ENCODE measurements at regions of chr11 and their contacts with region 1.

Region 1: GRCh38 chr11:10418259-10418949 is 36.7 kb upstream of the AMPD3 start:
- DNase-seq: peak; percentile 22
- ATAC-seq: peak; percentile 84
- H3K4me3 ChIP-seq: no peak overlapping the region
- H3K27ac ChIP-seq: no peak overlapping the region
- H3K4me1 ChIP-seq: 0 out of 2 replicates have a peak, but pooled peaks cover 2% of the 10 kb centered on the region
- H3K27me3 ChIP-seq: no peaks in the 10 kb centered on the region
- CTCF ChIP-seq: no peak

Region 2: DNA sequence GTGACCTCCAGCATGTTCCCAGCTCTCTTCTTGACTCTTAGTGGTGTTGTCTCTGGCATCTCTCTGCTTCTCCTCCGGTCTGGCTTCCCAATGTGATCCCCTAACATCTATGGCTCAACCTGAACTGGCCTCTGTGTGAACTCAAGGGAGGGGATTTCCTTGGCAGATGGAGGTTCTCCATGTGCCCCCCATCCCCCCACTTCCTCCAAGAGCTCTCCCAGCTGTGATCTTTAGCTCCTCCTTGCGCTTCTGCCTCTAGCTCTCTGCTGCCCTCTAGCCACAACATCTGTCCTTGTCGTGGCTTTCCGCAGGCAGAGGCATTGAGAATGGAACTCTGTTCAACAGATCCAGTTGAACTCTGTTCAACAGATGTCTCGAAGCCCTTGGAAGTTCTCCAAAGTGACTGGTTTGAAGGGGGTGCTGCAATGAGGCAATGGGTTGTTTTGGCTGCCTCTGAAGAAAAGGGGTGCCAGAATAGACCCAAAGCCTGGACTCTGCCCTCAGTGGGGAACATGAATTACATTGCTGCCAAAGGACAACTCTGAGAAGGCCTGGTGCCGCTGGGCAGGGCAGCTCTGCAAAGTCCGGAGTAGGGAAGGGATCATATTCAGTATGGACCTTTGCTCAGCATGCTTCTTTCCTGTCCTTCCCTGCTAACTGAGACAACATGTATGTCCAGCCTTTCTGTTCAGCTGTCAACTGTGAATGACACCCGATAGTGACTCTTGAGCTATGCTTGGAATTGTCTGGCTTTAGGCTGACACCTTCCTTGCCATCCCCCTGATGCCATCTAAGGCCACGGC is 51.6 kb before region 1 on chr11:
- CTCF ChIA-PET with region 1: no interaction called
- POLR2A ChIA-PET with region 1: no interaction called
- intact Hi-C with region 1: no loop called
- DNase-seq: peak; percentile 85
- ATAC-seq: peak; percentile 87
- H3K4me3 ChIP-seq: no peak overlapping the region
- H3K27ac ChIP-seq: no peak overlapping the region
- H3K4me1 ChIP-seq: peaks cover 6% of the 10 kb centered on the region
- H3K27me3 ChIP-seq: no peaks in the 10 kb centered on the region
- CTCF ChIP-seq: peak; percentile 88

Region 3: DNA sequence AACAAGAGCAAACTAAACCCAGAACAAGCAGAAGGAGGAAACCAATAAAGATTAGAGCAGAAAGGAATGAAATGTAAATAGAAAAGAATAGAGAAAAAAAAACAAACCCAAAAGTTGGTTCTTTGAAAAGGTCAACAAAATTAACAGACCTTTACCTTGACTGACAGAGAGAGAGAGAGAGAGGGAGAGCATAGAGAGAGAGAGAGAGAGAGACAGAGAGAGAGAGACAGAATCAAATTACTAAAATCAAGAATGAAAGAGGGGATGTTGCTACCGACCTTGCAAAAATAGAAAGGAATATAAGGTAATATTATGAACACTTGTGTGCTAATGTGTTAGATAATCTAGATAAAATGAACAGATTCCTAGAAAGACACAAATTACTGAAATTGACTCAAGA is 14.1 kb after region 1 on chr11:
- CTCF ChIA-PET with region 1: no interaction called
- POLR2A ChIA-PET with region 1: no interaction called
- intact Hi-C with region 1: loop called (anchors 1 kb)
- DNase-seq: peak; percentile 8
- ATAC-seq: peak; percentile 55
- H3K4me3 ChIP-seq: peak overlapping the region; percentile 35; the same call in 1 of the 2 replicates
- H3K27ac ChIP-seq: peak overlapping the region; percentile 39
- H3K4me1 ChIP-seq: peaks cover 29% of the 10 kb centered on the region
- H3K27me3 ChIP-seq: no peaks in the 10 kb centered on the region
- CTCF ChIP-seq: no peak